Activated CD4-positive, alpha-beta memory T cell treated with anti-CD3 and anti-CD28 coated beads for 36 hours (primary cell): ENCODE measurements at regions of chr5 and their contacts with region 1.

Region 1: DNA sequence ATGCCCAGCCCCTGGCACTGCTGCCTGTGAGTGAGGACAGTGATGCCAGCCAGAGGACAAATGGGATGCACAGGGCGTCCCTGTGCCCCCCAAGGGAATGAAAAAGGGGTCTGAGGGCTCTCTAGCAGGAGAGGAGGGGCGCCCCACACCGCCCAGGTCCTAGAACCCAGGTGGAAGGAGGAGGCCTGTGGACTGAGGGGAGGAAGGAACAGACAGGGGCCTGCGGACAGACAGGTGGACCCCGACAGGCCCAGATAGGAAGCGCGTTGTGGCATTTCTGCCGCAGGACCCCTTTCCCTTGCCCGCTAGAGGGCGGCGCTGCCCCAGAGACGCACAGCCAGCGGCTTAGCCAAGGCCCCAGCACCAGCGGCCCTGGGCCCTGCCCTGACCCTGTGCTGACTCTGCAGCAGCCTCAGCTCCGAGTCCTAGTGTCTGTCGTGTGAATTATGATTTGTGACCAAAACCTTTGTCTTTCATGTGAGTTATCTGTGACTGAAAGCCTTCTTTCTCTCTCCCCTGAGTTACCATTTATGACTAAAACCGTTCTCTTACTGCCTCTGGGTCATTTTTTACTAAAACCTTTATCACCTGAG is 30.7 kb downstream of the TRIP13 start:
- DNase-seq: peak; percentile 77
- H3K4me3 Mint-ChIP-seq: no peak overlapping the region
- H3K27ac Mint-ChIP-seq: no peak overlapping the region
- H3K4me1 Mint-ChIP-seq: peaks cover 25% of the 10 kb centered on the region
- H3K27me3 Mint-ChIP-seq: peaks cover 24% of the 10 kb centered on the region

Region 2: DNA sequence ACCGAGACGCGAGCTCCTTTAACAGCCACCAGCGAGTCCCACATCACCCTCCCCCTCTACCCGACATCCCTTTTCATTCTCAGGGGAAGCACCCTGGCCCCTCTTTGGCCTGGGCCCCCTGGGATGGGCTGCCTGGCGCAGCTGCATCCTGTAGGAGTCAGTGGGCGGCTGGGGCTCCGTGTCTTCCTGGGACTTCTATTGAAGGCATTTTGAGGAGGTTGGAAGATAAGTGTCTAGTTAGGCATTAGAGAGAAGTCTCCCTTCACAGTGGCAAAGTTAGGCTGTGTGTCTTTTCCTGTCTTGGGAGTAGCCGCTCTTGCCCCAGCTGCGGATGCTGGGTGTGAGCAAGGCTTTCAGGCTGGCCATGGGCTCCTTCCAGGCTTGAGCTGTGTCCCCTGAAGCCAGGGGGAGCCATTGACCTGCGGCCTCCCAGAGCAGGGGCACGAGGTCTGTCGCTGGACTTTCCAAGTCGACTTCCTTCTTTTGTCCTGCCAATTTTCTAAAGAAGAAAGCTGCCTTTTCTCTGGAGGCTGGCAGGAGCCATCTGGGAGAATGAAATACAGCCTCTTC is 66.7 kb after region 1 on chr5:
- CTCF ChIA-PET with region 1: no interaction called
- POLR2A ChIA-PET with region 1: no interaction called
- intact Hi-C with region 1: loop called (anchors 1 kb)
- DNase-seq: no peak
- H3K4me3 Mint-ChIP-seq: no peak overlapping the region
- H3K27ac Mint-ChIP-seq: no peak overlapping the region
- H3K4me1 Mint-ChIP-seq: no peaks in the 10 kb centered on the region
- H3K27me3 Mint-ChIP-seq: peaks cover 42% of the 10 kb centered on the region

Region 3: DNA sequence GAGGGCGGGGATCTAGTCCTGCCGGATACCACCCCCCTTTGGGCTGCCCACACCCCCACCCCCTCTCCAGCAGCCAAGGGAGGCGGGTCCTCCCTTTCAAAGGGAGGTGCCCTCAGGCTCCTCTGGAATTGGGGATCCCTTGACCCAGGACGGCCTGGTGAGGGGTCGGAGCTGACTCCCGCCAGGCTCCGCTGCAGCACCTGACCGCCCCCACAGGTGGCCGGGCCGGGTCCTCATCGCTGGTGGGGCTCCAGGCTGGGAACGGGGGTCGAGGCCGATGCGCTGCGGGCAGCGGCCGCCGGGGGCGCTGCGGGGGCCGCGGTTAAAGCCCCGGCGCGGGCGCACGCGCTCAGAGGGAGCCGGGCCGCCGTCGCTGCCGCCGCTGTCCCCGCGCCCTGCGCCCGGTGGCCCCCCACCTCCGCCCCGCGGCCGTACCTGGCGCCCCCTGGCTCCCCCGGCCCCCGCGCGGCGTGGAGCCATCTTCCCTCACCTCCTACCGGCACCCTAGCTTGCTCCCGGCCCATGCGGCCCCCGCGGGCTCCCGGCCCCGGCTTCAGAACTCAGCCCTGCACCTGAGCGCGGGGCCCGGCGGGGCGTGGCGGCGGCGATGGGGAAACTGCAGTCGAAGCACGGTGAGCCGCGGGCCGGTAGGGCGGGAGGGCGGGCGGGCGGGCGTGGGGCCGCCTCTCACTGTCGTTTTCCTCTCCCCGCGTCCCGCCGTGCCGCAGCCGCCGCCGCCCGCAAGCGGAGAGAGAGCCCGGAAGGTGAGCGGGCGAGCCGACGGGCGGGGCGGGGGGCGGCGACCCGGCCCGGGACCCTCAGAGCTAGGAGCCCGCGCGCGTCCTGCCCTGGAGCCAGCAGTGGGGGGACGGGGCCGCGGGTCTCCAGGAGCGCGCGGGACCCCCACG is 85.3 kb after region 1 on chr5 and contains the start of gene NKD2:
- CTCF ChIA-PET with region 1: interaction called, 11 read pairs
- POLR2A ChIA-PET with region 1: no interaction called
- intact Hi-C with region 1: loop called (anchors 2 kb)
- DNase-seq: peak; percentile 42
- H3K4me3 Mint-ChIP-seq: peak within 1 kb of the TSS; percentile 47
- H3K27ac Mint-ChIP-seq: no peak within 1 kb of the TSS
- H3K4me1 Mint-ChIP-seq: peaks cover 13% of the 10 kb centered on the region
- H3K27me3 Mint-ChIP-seq: peaks cover 53% of the 10 kb centered on the region
- total RNA-seq, gene NKD2: 0.41 to 1.1 TPM

Region 4: GRCh38 chr5:1140171-1140817 is 216.9 kb after region 1 on chr5:
- CTCF ChIA-PET with region 1: interaction called, 23 read pairs
- POLR2A ChIA-PET with region 1: no interaction called
- intact Hi-C with region 1: loop called (anchors 1 kb)
- DNase-seq: peak; percentile 77
- H3K4me3 Mint-ChIP-seq: no peak overlapping the region
- H3K27ac Mint-ChIP-seq: no peak overlapping the region
- H3K4me1 Mint-ChIP-seq: peaks cover 2% of the 10 kb centered on the region
- H3K27me3 Mint-ChIP-seq: peaks cover 4% of the 10 kb centered on the region

Region 5: DNA sequence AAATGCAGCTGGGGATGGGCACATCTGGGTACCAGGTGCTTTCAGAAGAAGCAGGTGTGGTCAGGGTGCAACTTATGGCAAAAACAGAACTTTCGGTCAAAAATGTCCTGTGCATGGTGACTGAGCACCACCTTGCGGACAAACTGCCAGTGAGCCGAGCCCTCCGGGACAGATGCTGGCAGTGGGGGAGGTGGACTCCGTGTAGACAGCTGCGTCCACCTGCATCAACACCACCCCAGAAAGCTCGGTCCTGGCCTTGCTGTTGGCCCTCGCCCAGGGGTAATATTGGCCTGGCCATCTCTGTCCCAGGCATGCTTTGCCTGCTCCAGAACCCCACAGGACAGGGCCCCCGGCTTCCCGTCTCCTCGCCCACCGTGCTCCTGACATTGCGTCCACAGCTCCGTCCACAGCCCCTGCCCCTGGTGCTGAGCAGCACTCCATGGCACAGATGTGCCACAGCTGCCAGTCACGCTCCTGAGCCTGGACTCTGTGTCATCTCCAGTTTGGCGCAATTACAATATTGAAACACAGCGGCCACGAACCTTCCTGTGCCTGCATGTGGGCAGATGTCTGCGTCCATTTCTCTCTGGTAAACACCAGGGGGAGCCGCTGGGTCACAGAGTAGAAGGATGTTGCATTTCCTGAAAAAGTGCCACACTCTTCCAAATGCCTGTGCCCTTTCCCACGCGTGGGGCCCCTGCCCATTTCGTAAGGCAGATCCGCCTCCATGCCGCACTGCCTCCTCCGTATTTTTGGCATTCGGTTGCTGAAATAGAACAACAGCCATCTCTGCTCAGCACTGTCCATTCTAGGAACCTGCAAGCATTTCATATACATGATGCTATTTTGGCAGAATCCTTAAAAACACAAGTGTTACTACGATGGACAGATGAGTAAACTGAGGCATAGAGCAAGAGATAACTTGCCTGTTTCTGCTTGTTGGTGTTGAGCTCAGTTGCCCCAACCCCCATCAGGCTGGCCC is 244.6 kb after region 1 on chr5:
- CTCF ChIA-PET with region 1: interaction called, 6 read pairs
- POLR2A ChIA-PET with region 1: no interaction called
- intact Hi-C with region 1: loop called (anchors 10 kb)
- DNase-seq: peak; percentile 69
- H3K4me3 Mint-ChIP-seq: no peak overlapping the region
- H3K27ac Mint-ChIP-seq: no peak overlapping the region
- H3K4me1 Mint-ChIP-seq: peaks cover 8% of the 10 kb centered on the region
- H3K27me3 Mint-ChIP-seq: peaks cover 11% of the 10 kb centered on the region